Colonic mucosa (tissue), 4 donors: ENCODE measurements at regions of chr2 and their contacts with region 1.

Region 1: DNA sequence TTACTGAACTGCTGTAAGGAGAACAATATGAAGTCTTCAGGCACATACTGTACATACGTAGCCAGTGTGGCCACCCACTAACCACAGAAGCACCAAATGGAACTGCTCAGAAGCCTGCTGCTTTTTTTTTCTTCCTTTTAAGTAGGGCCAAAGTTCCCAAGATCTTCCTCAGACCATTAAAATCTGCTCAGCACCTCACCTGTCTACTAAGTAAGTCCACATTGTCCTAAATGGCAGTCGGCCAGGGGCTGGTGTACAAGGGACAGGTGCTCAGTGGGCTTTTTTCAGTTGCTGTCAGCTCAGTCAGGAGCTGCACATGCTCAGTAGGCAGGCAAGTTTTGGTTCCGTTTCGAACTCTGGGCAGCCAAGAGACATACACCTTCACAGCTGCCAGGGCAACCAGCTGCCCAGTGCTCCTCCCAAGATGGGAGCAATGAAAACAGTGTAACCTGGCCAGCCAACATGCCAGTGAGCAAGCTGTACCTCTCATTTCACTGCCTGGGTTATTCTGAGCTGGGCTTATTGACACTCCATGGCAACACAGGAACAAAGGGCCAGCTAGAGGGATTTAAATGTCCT is 86.1 kb downstream of the ACVR1 start:
- DNase-seq: peak; percentile 53
- H3K4me3 ChIP-seq: no peak overlapping the region
- H3K27ac ChIP-seq: peak overlapping the region; percentile 11
- H3K4me1 ChIP-seq: peaks cover 7% of the 10 kb centered on the region
- H3K27me3 ChIP-seq: no peaks in the 10 kb centered on the region
- CTCF ChIP-seq: no peak

Region 2: DNA sequence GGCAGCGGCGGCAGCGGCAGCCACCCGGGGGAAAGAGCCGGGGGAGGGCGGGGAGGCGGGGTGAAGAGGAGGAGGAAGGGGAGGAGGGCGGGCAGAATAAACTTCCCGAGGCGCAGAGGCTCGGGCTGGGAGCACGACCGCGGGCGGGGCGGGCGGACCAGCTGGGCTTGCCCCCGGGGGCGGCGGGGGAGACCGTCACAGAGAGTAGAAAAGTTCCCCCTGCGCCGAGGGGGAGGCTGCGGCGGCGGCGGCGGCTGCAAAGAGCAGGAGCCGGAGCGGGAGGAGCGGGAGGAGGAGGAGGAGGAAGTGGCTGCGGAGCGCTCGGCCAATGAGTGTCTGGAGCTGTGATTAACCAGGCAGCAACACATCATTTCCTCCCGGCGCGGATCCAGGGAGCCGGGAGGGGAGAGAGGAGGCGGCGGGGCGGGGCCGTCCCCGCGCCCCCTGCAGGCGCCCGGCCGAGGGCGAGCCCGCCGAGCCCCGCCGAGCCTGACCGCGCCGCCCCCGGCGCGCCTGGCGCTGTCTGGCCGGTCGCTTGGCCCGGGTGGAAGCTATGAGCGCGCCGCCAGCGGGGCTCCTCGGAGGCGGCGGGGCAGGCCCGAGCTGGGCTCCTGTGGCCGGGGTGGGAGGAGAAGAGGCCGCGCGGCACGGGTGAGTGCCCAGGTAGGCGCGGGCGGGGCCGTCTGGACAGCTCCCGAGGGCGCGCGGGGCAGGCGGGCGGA is 86.2 kb after region 1 on chr2 and contains the start of gene ACVR1:
- intact Hi-C with region 1: loop called (anchors 5 kb)
- DNase-seq: peak; percentile 94
- H3K4me3 ChIP-seq: peak within 1 kb of the TSS; percentile 73
- H3K27ac ChIP-seq: peak within 1 kb of the TSS; percentile 97
- H3K4me1 ChIP-seq: peaks cover 5% of the 10 kb centered on the region
- H3K27me3 ChIP-seq: no peaks in the 10 kb centered on the region
- CTCF ChIP-seq: no peak
- total RNA-seq, gene ACVR1: 15.8 to 18.0 TPM

Region 3: GRCh38 chr2:158004126-158004764 is 214.2 kb after region 1 on chr2:
- intact Hi-C with region 1: no loop called
- DNase-seq: no peak
- H3K4me3 ChIP-seq: no peak overlapping the region
- H3K27ac ChIP-seq: no peak overlapping the region
- H3K4me1 ChIP-seq: no peaks in the 10 kb centered on the region
- H3K27me3 ChIP-seq: no peaks in the 10 kb centered on the region
- CTCF ChIP-seq: no peak